CD8-positive, alpha-beta memory T cell (primary cell): ENCODE measurements at regions of chr19 and their contacts with region 1.

Region 1: DNA sequence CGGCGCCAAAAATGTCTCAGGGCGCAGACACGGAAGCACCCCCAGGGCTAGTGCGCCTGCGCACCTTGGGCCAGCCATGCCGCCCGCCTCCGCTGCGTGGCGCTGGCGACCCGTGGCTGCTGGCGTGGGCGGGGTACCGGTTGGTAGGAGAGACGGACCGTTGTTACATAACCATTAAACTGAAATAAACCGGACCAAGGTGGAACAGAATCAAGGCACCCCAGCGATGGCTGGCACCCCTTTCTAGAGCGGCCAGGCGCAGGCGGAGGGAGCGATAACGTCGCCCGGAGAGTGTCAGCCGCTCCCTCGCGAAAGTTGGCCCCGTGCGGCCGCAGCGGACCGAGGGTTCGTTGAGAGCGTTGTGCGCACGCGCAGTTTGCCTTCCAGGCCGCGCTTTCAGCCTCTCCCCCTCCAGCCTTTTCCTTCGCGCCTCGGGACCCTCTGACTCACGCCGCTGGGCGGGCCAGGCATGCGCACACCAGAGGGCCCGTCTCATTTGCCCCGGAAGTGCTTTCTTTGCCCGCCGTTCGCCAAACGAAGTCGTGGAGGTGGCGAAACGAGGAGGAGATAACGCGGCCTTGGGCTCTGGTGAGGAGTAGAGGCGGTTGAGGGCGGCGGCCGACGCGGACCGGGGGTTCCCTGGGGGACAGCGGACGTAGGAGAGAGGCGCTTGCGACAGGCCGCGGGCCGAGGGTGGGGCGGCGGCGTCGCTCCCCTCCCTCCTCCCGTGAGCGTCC is at the starts of genes PLEKHJ1 and SF3A2:
- DNase-seq: peak; percentile 96 to 100 (median 99)
- H3K4me3 ChIP-seq: peak within 1 kb of the TSS; percentile 88
- H3K4me3 Mint-ChIP-seq: peak within 1 kb of the TSS; percentile 89 to 100 (median 98)
- H3K27ac ChIP-seq: peak within 1 kb of the TSS; percentile 98
- H3K27ac Mint-ChIP-seq: peak within 1 kb of the TSS; percentile 92 to 99 (median 98)
- H3K4me1 ChIP-seq: peaks cover 60% of the 10 kb centered on the region
- H3K4me1 Mint-ChIP-seq: peaks cover 58 to 77% (median 63%) of the 10 kb centered on the region in 3 donors
- H3K27me3 ChIP-seq: no peaks in the 10 kb centered on the region
- H3K27me3 Mint-ChIP-seq: peaks cover 0 to 5% of the 10 kb centered on the region in 2 donors
- total RNA-seq, gene PLEKHJ1: 96.6 to 99.1 TPM
- total RNA-seq, gene SF3A2: 131 to 138 TPM

Region 2: DNA sequence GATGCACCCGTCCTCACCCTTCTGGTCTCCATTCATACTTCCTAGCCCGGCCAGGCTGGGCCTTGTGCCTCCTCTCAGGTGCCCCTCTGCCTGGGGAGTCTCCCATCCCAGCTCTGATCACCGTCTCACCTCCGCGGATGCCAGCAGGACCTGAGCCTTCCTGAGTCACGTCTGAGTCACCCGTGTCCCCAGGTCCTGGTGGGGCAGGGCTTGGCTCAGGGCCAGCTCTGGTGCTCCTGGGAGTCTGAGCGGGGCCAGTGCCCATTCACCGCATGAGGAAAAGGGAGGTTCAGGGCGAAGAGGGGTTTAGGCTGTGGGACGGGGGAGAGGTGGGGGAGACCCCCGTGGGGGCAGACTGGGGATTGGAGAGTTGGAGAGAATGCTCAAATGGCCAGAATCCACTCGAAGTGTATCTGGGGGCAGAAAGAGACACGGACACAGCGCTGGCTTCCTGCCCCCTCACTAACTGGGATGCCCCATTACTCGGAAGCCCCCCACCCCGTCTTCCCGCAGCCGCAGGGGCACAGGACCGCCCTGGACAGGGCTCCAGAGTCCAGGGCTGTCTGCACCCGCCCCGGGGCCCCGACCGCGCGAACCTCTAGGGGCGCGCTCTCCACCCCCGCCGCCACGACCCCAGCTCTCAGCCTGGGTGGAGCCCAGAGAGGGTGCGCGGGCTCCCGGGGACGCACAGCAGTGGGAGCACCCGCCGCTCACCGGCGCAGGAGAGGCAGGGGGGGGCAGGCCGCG is 424.8 kb before region 1 on chr19:
- CTCF ChIA-PET with region 1: no interaction called
- POLR2A ChIA-PET with region 1: no interaction called
- DNase-seq: peak in 4 of 5 donors; percentile 31 to 72 (median 48)
- H3K4me3 ChIP-seq: peak overlapping the region; percentile 44
- H3K4me3 Mint-ChIP-seq: peak overlapping the region; percentile 61 to 95 (median 70)
- H3K27ac ChIP-seq: peak overlapping the region; percentile 12
- H3K27ac Mint-ChIP-seq: peak overlapping the region in 5 of 8 donors; percentile 29 to 69 (median 62)
- H3K4me1 ChIP-seq: peaks cover 12% of the 10 kb centered on the region
- H3K4me1 Mint-ChIP-seq: peaks cover 10 to 19% (median 10%) of the 10 kb centered on the region in 3 donors
- H3K27me3 ChIP-seq: no peaks in the 10 kb centered on the region
- H3K27me3 Mint-ChIP-seq: no peaks in the 10 kb centered on the region

Region 3: DNA sequence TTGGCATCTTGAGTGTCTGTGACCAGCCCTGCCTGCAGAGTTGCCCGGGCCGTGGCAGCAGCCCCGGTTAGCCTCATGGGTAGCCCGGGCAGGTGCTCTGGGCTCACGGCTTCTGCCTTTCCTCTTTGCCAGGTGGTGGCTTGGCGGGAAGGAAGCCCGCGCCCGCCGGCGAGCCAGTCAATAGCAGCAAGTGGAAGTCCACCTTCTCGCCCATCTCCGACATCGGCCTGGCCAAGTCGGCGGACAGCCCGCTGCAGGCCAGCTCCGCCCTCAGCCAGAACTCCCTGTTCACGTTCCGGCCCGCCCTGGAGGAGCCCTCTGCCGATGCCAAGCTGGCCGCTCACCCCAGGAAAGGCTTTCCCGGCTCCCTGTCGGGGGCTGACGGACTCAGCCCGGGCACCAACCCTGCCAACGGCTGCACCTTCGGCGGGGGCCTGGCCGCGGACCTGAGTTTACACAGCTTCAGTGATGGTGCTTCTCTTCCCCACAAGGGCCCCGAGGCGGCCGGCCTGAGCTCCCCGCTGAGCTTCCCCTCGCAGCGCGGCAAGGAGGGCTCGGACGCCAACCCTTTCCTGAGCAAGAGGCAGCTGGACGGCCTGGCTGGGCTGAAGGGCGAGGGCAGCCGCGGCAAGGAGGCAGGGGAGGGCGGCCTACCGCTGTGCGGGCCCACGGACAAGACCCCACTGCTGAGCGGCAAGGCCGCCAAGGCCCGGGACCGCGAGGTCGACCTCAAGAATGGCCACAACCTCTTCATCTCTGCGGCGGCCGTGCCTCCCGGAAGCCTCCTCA is 10.2 kb before region 1 on chr19:
- CTCF ChIA-PET with region 1: interaction called, 3 read pairs
- POLR2A ChIA-PET with region 1: interaction called, 14 read pairs
- DNase-seq: no peak
- H3K4me3 ChIP-seq: no peak overlapping the region
- H3K4me3 Mint-ChIP-seq: no peak overlapping the region
- H3K27ac ChIP-seq: no peak overlapping the region
- H3K27ac Mint-ChIP-seq: peak overlapping the region in 2 of 8 donors; percentile 58 to 63
- H3K4me1 ChIP-seq: no peaks in the 10 kb centered on the region
- H3K4me1 Mint-ChIP-seq: peaks cover 11 to 13% (median 12%) of the 10 kb centered on the region in 3 donors
- H3K27me3 ChIP-seq: no peaks in the 10 kb centered on the region
- H3K27me3 Mint-ChIP-seq: no peaks in the 10 kb centered on the region

Region 4: DNA sequence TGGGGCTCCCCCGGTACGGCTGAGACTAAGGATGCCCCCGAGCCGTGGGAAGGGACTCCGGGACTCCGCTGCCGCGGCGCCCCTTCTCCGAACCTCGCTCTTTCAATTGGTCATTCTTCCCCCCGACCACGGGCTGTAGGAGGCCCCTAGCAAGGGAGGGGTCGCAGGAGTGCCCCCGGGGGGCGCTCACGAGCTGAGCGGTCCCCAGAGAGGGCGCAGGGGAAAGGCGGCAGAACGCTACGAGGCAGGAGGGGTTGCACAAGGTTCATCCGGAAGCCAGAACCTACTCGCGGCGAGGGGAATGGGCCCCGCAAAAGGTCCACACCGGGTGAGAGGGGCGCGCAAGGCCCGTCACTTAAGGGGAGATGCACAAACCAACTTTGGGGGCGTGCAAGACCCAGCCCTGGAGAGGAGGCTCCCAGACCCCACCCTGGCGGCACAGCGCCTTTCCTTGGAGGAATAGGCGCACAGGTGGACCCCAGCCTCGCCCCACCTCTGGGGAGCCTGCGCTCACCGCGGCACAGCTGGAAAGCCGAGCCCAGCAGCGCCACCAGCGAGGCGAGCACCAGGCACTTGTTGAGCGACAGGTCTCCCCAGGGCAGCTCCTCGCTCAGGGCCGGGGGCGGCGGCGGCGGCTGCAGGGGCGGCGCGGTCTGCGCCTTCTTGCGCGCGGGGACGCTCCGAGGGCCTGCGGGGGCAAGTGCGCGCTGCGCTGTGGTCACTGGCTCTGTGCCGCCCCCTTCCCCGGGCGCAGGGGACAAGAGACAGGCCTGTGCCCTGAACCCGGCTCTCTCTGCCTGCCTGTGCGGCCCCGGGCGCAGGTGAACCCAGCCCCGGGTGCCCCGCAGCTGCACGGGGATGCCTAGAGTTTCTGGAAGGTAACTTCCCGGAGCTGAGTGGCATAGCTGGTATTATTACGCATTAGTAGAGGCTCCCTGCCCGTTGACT is 16.9 kb after region 1 on chr19:
- CTCF ChIA-PET with region 1: interaction called, 17 read pairs
- POLR2A ChIA-PET with region 1: interaction called, 69 read pairs
- DNase-seq: peak in 3 of 5 donors; percentile 60 to 71 (median 67)
- H3K4me3 ChIP-seq: peak overlapping the region; percentile 58
- H3K4me3 Mint-ChIP-seq: peak overlapping the region; percentile 72 to 90 (median 79)
- H3K27ac ChIP-seq: no peak overlapping the region
- H3K27ac Mint-ChIP-seq: peak overlapping the region in 6 of 8 donors; percentile 27 to 77 (median 50)
- H3K4me1 ChIP-seq: peaks cover 30% of the 10 kb centered on the region
- H3K4me1 Mint-ChIP-seq: peaks cover 7 to 37% (median 10%) of the 10 kb centered on the region in 3 donors
- H3K27me3 ChIP-seq: peaks cover 10% of the 10 kb centered on the region
- H3K27me3 Mint-ChIP-seq: peaks cover 0 to 2% of the 10 kb centered on the region in 2 donors

Region 5: GRCh38 chr19:2261438-2262172 is 25.1 kb after region 1 on chr19:
- CTCF ChIA-PET with region 1: interaction called, 34 read pairs
- POLR2A ChIA-PET with region 1: interaction called, 45 read pairs
- DNase-seq: peak in 4 of 5 donors; percentile 44 to 71 (median 46)
- H3K4me3 ChIP-seq: no peak overlapping the region
- H3K4me3 Mint-ChIP-seq: peak overlapping the region in 6 of 7 donors; percentile 27 to 47 (median 36)
- H3K27ac ChIP-seq: no peak overlapping the region
- H3K27ac Mint-ChIP-seq: peak overlapping the region in 7 of 8 donors; percentile 42 to 91 (median 79)
- H3K4me1 ChIP-seq: peaks cover 40% of the 10 kb centered on the region
- H3K4me1 Mint-ChIP-seq: peaks cover 26 to 49% (median 28%) of the 10 kb centered on the region in 3 donors
- H3K27me3 ChIP-seq: no peaks in the 10 kb centered on the region
- H3K27me3 Mint-ChIP-seq: no peaks in the 10 kb centered on the region

Region 6: DNA sequence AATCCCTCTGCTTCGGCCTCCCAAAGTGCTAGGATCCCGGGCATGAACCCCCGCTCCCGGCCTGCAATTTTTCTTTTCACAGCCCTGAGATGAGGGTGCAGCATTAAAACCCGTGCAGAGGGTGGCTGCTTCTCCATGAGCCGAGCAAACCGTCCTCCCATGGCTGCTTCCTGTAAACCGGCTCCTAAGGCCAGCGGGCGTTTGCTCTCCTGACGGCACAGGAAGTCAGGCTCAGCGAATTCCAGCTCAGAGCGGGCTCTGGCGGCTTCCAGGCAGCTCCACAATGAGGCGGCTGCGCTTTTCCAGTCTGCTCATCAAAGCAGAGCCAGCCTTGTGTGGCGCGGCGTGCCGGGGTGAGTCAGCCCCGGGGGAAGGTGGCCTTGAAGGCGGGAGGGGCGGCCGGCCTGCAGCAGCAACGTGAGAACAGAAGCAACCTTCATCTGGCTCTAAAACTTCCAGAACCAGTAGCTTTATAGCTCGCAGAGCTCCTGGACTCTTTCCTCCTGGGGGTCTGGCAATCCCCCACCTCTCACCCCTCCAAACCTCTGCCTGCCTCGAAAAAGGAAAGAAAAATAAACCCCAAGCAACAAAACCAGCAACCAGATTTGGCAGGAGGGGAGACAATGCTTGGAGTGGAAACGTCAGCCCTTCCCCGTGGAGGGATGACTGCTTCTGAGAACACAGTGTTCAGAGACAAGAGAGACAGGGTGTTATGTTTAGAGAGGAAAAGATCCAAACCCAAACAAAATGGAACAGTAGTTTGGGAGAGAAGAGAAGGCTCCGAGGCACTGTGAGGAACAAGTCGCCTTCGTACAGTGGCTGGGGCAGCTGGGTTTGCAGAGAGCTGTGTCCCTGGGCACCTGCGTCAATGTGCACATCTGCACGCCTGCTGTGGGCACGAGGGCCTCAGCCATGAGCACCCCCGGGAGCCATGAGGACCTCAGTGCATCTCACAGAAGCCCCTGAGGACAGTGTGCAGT is 307.3 kb after region 1 on chr19:
- CTCF ChIA-PET with region 1: no interaction called
- POLR2A ChIA-PET with region 1: no interaction called
- DNase-seq: peak; percentile 15 to 70 (median 35)
- H3K4me3 ChIP-seq: peak overlapping the region; percentile 49
- H3K4me3 Mint-ChIP-seq: peak overlapping the region; percentile 36 to 75 (median 68)
- H3K27ac ChIP-seq: peak overlapping the region; percentile 48
- H3K27ac Mint-ChIP-seq: peak overlapping the region in 5 of 8 donors; percentile 23 to 75 (median 34)
- H3K4me1 ChIP-seq: peaks cover 10% of the 10 kb centered on the region
- H3K4me1 Mint-ChIP-seq: peaks cover 10 to 18% (median 14%) of the 10 kb centered on the region in 3 donors
- H3K27me3 ChIP-seq: no peaks in the 10 kb centered on the region
- H3K27me3 Mint-ChIP-seq: peaks cover 0 to 3% of the 10 kb centered on the region in 2 donors